AG04450 (cell line): ENCODE measurements at regions of chr9 and their contacts with region 1.

Region 1: DNA sequence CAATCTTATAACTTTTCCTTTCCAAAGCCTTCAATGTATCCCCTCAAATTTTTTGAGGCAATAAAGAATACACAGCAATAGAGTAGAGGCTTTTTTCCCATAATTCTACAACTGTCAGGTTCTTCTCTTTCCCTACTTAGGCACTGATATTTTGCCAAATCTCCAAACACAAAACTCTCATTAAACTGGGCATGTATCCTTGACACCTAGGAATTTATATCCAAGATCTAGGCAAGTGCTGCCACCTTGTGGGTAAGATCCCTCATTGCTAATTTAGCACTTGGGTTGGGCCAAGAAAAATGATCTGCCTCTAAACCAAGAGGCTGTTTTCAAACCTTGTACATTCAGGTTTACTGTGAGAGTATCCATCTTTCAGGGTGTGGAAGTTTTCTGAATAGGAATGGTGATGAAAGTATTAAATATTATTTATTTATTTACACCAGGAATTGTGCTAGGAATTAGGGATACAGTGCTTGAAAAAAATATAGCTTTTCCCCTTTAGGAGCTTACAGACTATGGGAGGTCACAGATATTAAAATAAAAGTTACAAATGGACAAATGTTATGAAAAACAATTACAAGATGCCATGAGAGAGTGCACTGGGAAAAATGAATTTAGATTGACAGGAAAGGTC is 17.6 kb downstream of the TSTD2 start:
- DNase-seq: peak; percentile 32
- H3K4me3 ChIP-seq: no peak overlapping the region
- H3K27ac ChIP-seq: no peak overlapping the region
- H3K27me3 ChIP-seq: no peaks in the 10 kb centered on the region
- CTCF ChIP-seq: peak; percentile 84

Region 2: GRCh38 chr9:96856363-96857286 is 758.9 kb before region 1 on chr9:
- CTCF ChIA-PET with region 1: interaction called, 34 read pairs
- POLR2A ChIA-PET with region 1: no interaction called
- DNase-seq: peak; percentile 32
- H3K4me3 ChIP-seq: no peak overlapping the region
- H3K27ac ChIP-seq: no peak overlapping the region
- H3K27me3 ChIP-seq: no peaks in the 10 kb centered on the region
- CTCF ChIP-seq: peak; percentile 91

Region 3: GRCh38 chr9:97411789-97412625 is 203.5 kb before region 1 on chr9 and contains the start of gene TDRD7:
- CTCF ChIA-PET with region 1: interaction called, 86 read pairs
- POLR2A ChIA-PET with region 1: no interaction called
- DNase-seq: peak; percentile 42
- H3K4me3 ChIP-seq: peak within 1 kb of the TSS; percentile 72
- H3K27ac ChIP-seq: no peak within 1 kb of the TSS
- H3K27me3 ChIP-seq: peaks cover 10% of the 10 kb centered on the region
- CTCF ChIP-seq: peak; percentile 96
- polyA plus RNA-seq, gene TDRD7: 7.3 and 8.2 TPM in 2 replicates

Region 4: GRCh38 chr9:97468658-97469448 is 146.7 kb before region 1 on chr9:
- CTCF ChIA-PET with region 1: interaction called, 330 read pairs
- POLR2A ChIA-PET with region 1: no interaction called
- DNase-seq: peak; percentile 16
- H3K4me3 ChIP-seq: no peak overlapping the region
- H3K27ac ChIP-seq: no peak overlapping the region
- H3K27me3 ChIP-seq: no peaks in the 10 kb centered on the region
- CTCF ChIP-seq: peak; percentile 82

Region 5: DNA sequence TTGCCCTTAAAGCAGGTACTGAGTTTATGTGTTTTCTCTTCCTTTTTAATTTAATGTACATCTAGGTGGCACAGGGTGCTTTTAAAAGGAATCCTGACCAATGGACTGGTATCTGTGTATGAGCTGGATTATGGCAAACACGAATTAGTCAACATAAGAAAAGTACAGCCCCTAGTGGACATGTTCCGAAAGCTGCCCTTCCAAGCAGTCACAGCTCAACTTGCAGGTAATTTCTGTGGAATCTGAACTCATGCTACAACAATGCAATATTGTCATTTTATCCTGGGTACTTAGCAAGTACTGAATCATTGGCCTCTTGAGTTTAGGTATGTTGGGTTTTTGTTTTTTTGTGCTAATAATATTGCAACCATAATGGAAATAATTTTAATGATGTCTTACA is 128.4 kb before region 1 on chr9:
- CTCF ChIA-PET with region 1: interaction called, 14 read pairs
- POLR2A ChIA-PET with region 1: no interaction called
- DNase-seq: no peak
- H3K4me3 ChIP-seq: no peak overlapping the region
- H3K27ac ChIP-seq: no peak overlapping the region
- H3K27me3 ChIP-seq: no peaks in the 10 kb centered on the region
- CTCF ChIP-seq: peak; percentile 52

Region 6: GRCh38 chr9:97632985-97633858 is 17.7 kb after region 1 on chr9 and contains the starts of genes NCBP1 and TSTD2:
- CTCF ChIA-PET with region 1: interaction called, 61 read pairs
- POLR2A ChIA-PET with region 1: interaction called, 4 read pairs
- DNase-seq: peak; percentile 96
- H3K4me3 ChIP-seq: peak within 1 kb of the TSS; percentile 97
- H3K27ac ChIP-seq: peak within 1 kb of the TSS; percentile 100
- H3K27me3 ChIP-seq: no peaks in the 10 kb centered on the region
- CTCF ChIP-seq: 0 out of 2 replicates have a peak, but pooled peaks have one; percentile 2
- polyA plus RNA-seq, gene NCBP1: 28.8 and 39.2 TPM in 2 replicates
- polyA plus RNA-seq, gene TSTD2: 17.1 and 17.3 TPM in 2 replicates